Esophagus muscularis mucosa (tissue), 4 donors: ENCODE measurements at regions of chr3 and their contacts with region 1.

Region 1: GRCh38 chr3:49445381-49445780 is 16.3 kb upstream of the NICN1 start:
- DNase-seq: no peak
- H3K4me3 ChIP-seq: no peak overlapping the region
- H3K27ac ChIP-seq: no peak overlapping the region
- H3K4me1 ChIP-seq: peaks cover 8 to 19% (median 14%) of the 10 kb centered on the region in 4 donors
- H3K27me3 ChIP-seq: no peaks in the 10 kb centered on the region
- CTCF ChIP-seq: no peak
- EP300 ChIP-seq: no peak
- POLR2A ChIP-seq: no peak

Region 2: DNA sequence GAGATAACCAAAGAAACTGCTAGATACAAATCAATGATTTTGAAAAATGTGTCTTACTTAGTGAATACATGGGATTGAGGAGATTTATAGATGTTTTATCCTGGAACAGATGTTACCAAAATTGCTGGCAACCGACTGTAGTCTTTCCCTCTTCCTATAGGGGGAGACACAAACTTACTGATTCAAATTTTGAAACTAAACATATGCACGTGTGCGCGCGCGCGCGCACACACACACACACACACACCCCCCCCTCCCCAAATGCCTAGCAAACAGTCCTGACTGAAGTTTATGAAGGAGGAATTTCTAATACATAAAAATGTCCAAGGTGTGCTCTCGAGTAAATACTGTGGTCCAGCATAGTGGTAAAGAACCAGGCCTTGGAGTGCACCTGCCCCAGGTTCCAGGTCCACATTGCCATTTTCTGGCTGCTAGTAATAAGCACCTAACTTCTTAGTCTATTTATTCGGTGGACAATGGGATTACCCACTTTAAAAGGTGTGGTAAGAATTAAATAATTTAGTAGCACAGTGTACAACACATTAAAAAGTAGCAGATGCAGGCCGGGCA is 149.8 kb before region 1 on chr3:
- intact Hi-C with region 1: loop called (anchors 5 kb)
- DNase-seq: no peak
- H3K4me3 ChIP-seq: no peak overlapping the region
- H3K27ac ChIP-seq: peak overlapping the region; percentile 64 to 77 (median 72)
- H3K4me1 ChIP-seq: peaks cover 18 to 25% (median 22%) of the 10 kb centered on the region in 4 donors
- H3K27me3 ChIP-seq: no peaks in the 10 kb centered on the region
- CTCF ChIP-seq: peak; percentile 58 to 62 (median 60)
- EP300 ChIP-seq: no peak
- POLR2A ChIP-seq: no peak